Endothelial cell of umbilical vein (primary cell): ENCODE measurements at regions of chr13 and their contacts with region 1.

Region 1: DNA sequence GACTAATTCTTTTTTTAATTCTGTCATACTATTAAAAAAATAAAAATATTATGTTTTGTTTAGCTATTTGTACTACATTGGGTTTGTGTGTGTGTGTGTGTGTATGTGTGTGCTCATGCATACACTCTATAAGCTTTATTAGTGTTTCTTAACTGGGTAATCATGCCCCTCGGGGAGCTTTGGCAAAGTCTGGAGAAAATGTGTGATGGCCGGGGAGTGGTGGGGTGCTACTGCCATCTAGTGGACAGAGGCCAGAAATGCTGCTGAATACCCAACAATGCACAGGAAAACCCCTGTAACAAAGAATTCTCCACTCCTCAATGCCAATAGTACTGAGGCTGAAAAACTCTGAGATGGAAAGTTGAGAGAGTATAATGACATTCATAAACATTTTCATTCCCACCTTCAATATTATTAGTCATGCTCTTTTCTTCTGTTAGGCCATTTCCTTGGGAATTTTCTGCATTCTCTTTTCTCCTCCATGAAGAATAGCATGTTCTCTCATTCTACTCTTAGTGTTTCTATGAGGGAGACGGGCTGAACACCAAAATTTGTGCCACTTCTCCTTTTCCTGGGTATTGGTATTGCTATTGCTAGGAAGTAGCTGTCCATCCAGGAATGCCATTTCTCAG is 157.3 kb downstream of the DNAJC3 start:
- DNase-seq: peak; percentile 81
- H3K4me3 ChIP-seq: peak overlapping the region in 1 of 3 experiments; percentile 23
- H3K27ac ChIP-seq: peak overlapping the region; percentile 30
- H3K4me1 ChIP-seq: peaks cover 13% of the 10 kb centered on the region
- H3K27me3 ChIP-seq: no peaks in the 10 kb centered on the region
- CTCF ChIP-seq: peak; percentile 85 to 87
- POLR2A ChIP-seq: no peak

Region 2: DNA sequence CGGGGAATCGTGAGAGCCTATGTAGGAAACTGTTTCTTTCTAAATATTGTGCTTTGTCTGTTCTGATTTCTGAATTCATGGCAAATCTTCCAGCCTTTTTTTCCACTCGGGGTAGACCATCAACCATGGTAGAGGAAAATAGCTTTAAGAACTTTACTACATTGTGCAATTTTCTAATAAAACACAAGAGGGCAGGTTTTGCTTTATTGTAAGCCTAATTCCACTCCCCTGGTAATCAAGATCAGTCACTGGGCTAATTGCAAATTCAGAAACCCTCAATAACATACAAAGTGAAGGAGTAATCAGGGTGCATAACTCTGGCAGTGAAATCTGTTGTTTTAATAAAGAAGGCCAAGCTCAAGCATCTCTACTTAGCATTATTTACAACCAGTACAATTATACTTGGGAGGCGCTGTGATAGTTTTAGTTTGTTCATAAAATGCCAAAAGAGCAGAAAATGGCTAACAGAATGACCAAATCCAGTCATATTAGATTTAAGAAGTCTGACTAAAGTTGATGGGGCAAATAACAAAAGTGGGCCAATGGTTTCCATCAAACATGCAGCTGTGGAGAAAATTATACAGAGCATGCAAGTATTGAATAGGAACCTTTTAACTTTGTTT is 1398.5 kb before region 1 on chr13:
- CTCF ChIA-PET with region 1: interaction called, 3 read pairs
- POLR2A ChIA-PET with region 1: no interaction called
- dilution Hi-C with region 1: no loop called
- intact Hi-C with region 1: loop called (anchors 10 kb)
- DNase-seq: peak; percentile 43
- H3K4me3 ChIP-seq: no peak overlapping the region
- H3K27ac ChIP-seq: no peak overlapping the region
- H3K4me1 ChIP-seq: no peaks in the 10 kb centered on the region
- H3K27me3 ChIP-seq: peaks cover 15 to 18% of the 10 kb centered on the region in 2 experiments
- CTCF ChIP-seq: peak; percentile 27 to 35
- POLR2A ChIP-seq: no peak

Region 3: DNA sequence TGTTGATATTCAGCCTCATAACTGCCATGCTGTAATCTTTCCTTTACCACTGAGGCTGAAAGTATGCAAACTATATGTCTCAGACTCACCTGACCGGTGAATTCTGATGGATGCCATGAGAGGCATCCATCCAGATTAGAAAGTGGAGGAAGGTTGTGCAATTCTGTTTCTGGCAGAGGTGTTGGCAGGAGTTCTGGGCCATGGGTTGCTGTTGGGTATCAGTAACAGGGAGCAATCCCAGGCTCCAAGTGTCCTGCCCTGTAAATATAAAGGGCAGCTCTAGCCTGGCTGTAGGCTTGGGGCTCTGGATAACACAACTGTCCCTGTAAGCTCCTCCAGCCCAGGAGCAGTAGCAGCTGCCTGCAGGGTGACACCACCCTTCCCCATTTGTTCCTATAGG is 455.6 kb before region 1 on chr13:
- CTCF ChIA-PET with region 1: interaction called, 21 read pairs
- POLR2A ChIA-PET with region 1: no interaction called
- dilution Hi-C with region 1: no loop called
- intact Hi-C with region 1: loop called (anchors 1 kb)
- DNase-seq: no peak
- H3K4me3 ChIP-seq: no peak overlapping the region
- H3K27ac ChIP-seq: no peak overlapping the region
- H3K4me1 ChIP-seq: peaks cover 3% of the 10 kb centered on the region
- H3K27me3 ChIP-seq: peaks cover 2 to 6% of the 10 kb centered on the region in 2 experiments
- CTCF ChIP-seq: no peak
- POLR2A ChIP-seq: no peak

Region 4: DNA sequence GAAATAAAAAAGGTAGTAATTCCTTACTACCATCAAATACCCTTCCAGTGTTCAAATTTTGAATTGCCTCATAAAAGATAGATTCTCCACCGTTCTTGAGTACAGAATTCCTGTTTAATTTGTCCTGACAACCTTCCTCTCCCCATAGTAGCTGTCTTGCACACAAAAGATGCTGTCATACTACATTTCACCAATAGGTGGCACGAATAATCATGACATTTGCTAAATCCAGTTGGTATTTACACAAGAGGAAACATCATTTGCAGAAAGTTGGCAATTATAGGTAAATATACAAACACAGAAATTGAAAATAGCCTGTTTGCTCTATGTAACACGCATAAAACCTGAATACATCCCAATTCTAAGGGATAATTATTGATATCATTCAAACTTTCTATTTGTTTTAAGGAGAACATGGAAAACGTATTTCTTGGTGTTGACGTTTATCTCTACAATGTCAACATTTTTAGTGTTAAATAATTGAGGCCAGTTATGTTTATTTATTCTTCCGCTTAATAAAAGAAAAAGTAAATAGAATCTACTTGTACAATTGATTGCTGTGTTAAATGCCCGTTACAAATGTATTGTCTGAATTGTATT is 340.1 kb before region 1 on chr13:
- CTCF ChIA-PET with region 1: interaction called, 18 read pairs
- POLR2A ChIA-PET with region 1: no interaction called
- dilution Hi-C with region 1: no loop called
- intact Hi-C with region 1: loop called (anchors 1 kb)
- DNase-seq: peak; percentile 85
- H3K4me3 ChIP-seq: no peak overlapping the region
- H3K27ac ChIP-seq: no peak overlapping the region
- H3K4me1 ChIP-seq: no peaks in the 10 kb centered on the region
- H3K27me3 ChIP-seq: no peaks in the 10 kb centered on the region
- CTCF ChIP-seq: peak; percentile 48 to 59
- POLR2A ChIP-seq: no peak

Region 5: DNA sequence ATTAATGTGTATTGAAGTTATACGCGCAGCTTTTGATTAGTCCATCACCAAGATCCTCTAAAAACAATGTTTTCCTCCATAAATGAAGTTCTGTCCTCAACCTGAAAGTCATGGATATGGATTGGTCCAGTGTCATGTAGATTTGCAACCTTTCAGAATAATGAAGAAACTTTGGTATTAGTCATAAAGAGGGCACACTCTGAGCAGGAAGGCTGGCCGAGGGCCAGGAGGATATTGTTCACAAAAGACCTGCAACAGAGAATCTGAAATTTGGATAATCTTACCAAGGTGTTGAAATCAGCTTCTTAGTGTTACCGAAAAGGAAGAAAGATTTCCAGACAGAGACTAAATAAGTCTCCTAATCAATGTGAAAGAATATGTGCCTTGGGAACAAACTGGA is 261.0 kb before region 1 on chr13:
- CTCF ChIA-PET with region 1: no interaction called
- POLR2A ChIA-PET with region 1: no interaction called
- dilution Hi-C with region 1: no loop called
- intact Hi-C with region 1: no loop called
- DNase-seq: peak; percentile 51
- H3K4me3 ChIP-seq: no peak overlapping the region
- H3K27ac ChIP-seq: no peak overlapping the region
- H3K4me1 ChIP-seq: peaks cover 4% of the 10 kb centered on the region
- H3K27me3 ChIP-seq: no peaks in the 10 kb centered on the region
- CTCF ChIP-seq: no peak
- POLR2A ChIP-seq: no peak

Region 6: GRCh38 chr13:95624020-95624419 is 210.2 kb before region 1 on chr13:
- CTCF ChIA-PET with region 1: interaction called, 286 read pairs
- POLR2A ChIA-PET with region 1: interaction called, 4 read pairs
- dilution Hi-C with region 1: no loop called
- intact Hi-C with region 1: loop called (anchors 1 kb)
- DNase-seq: peak; percentile 50
- H3K4me3 ChIP-seq: no peak overlapping the region
- H3K27ac ChIP-seq: no peak overlapping the region
- H3K4me1 ChIP-seq: no peaks in the 10 kb centered on the region
- H3K27me3 ChIP-seq: no peaks in the 10 kb centered on the region
- CTCF ChIP-seq: peak; percentile 52 to 59
- POLR2A ChIP-seq: no peak

Region 7: GRCh38 chr13:95676762-95677563 is 157.3 kb before region 1 on chr13 and contains the start of gene DNAJC3:
- CTCF ChIA-PET with region 1: interaction called, 11 read pairs
- POLR2A ChIA-PET with region 1: interaction called, 12 read pairs
- dilution Hi-C with region 1: no loop called
- intact Hi-C with region 1: loop called (anchors 1 kb)
- DNase-seq: peak; percentile 99
- H3K4me3 ChIP-seq: peak within 1 kb of the TSS; percentile 57 to 89 (median 71)
- H3K27ac ChIP-seq: peak within 1 kb of the TSS; percentile 68
- H3K4me1 ChIP-seq: peaks cover 23% of the 10 kb centered on the region
- H3K27me3 ChIP-seq: no peaks in the 10 kb centered on the region
- CTCF ChIP-seq: no peak
- POLR2A ChIP-seq: peak; percentile 73
- total RNA-seq, gene DNAJC3: 48.6 and 51.2 TPM in 2 replicates

Region 8: GRCh38 chr13:95822303-95822702 is 11.9 kb before region 1 on chr13:
- CTCF ChIA-PET with region 1: interaction called, 44 read pairs
- POLR2A ChIA-PET with region 1: no interaction called
- dilution Hi-C with region 1: no loop called
- intact Hi-C with region 1: no loop called
- DNase-seq: no peak
- H3K4me3 ChIP-seq: no peak overlapping the region
- H3K27ac ChIP-seq: no peak overlapping the region
- H3K4me1 ChIP-seq: no peaks in the 10 kb centered on the region
- H3K27me3 ChIP-seq: no peaks in the 10 kb centered on the region
- CTCF ChIP-seq: no peak
- POLR2A ChIP-seq: no peak

Region 9: DNA sequence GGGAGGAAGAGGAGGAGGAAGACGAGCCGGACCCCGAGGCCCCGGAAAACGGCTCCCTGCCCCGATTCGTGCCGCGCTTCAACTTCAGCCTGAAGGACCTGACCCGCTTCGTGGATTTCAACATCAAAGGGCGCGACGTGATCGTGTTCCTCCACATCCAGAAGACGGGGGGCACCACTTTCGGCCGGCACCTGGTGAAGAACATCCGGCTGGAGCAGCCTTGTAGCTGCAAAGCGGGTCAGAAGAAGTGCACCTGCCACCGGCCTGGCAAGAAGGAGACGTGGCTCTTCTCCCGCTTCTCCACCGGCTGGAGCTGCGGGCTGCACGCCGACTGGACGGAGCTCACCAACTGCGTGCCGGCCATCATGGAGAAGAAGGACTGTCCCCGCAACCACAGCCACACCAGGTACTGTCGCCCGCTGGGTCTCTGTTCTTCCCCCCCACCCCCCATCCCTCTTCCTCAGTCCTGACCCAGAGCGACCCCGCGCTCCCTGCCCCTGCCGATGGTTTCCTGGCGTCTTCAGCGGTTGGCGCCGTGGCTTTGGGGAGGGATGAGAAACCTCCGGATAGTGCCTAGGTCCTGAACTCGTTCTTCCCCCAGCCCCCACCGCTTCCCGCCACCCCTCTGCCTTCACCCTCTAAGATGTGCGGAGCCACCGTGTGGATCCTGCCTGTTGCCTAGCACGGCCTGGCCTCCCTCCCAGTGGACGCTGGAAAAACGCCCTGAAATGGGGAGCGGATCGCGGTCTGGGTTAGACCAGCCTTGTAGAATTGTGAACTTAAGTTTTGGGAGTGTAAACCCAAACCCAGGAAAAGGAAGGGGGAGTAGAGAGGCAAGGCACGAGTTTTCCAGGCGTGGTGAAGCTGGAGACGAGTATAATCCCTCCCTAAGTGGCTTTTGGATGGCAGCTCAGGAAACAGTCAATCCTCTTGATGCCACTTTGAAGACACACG is 257.2 kb after region 1 on chr13:
- CTCF ChIA-PET with region 1: no interaction called
- POLR2A ChIA-PET with region 1: no interaction called
- dilution Hi-C with region 1: no loop called
- intact Hi-C with region 1: no loop called
- DNase-seq: peak; percentile 12
- H3K4me3 ChIP-seq: peak overlapping the region in 1 of 3 experiments; percentile 42
- H3K27ac ChIP-seq: no peak overlapping the region
- H3K4me1 ChIP-seq: peaks cover 27% of the 10 kb centered on the region
- H3K27me3 ChIP-seq: peaks cover 34 to 38% of the 10 kb centered on the region in 2 experiments
- CTCF ChIP-seq: no peak
- POLR2A ChIP-seq: no peak